CD8-positive, alpha-beta T cell (primary cell): ENCODE measurements at regions of chr7 and their contacts with region 1.

Region 1: DNA sequence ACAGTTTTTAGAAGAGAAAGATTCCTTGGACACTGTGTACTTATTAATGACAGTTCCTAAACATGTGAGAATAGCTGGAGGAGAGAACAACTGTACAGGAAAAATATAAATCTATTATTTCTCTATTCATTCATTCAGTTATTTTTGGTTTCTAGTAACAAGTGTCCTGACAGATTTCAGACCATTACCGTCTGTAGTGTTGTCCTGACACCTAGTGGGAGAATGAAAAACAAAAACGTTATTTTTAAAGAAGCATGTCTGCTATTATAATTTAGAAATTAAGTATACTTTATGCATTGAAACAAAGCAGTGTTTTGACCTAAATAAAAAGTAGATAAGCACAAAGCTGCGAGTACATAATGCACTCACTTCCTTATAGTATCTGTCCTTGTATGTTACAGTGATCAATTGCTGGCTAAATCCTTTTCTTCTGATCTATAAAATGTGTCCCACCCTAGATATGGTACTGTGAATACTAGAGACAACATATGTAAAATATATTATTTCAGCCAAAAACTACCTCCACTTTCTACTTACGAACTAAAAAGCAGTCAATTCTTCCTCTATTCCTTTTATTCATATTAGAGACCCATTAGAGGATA is 575.6 kb downstream of the ARL4A start:
- DNase-seq: peak in 2 of 9 experiments; percentile 47 to 55
- ATAC-seq: no peak
- H3K4me3 ChIP-seq: no peak overlapping the region
- H3K4me3 Mint-ChIP-seq: no peak overlapping the region
- H3K27ac ChIP-seq: no peak overlapping the region
- H3K27ac Mint-ChIP-seq: no peak overlapping the region
- H3K4me1 ChIP-seq: no peaks in the 10 kb centered on the region
- H3K4me1 Mint-ChIP-seq: no peaks in the 10 kb centered on the region
- H3K27me3 ChIP-seq: no peaks in the 10 kb centered on the region
- H3K27me3 Mint-ChIP-seq: no peaks in the 10 kb centered on the region
- CTCF ChIP-seq: peak; percentile 57

Region 2: DNA sequence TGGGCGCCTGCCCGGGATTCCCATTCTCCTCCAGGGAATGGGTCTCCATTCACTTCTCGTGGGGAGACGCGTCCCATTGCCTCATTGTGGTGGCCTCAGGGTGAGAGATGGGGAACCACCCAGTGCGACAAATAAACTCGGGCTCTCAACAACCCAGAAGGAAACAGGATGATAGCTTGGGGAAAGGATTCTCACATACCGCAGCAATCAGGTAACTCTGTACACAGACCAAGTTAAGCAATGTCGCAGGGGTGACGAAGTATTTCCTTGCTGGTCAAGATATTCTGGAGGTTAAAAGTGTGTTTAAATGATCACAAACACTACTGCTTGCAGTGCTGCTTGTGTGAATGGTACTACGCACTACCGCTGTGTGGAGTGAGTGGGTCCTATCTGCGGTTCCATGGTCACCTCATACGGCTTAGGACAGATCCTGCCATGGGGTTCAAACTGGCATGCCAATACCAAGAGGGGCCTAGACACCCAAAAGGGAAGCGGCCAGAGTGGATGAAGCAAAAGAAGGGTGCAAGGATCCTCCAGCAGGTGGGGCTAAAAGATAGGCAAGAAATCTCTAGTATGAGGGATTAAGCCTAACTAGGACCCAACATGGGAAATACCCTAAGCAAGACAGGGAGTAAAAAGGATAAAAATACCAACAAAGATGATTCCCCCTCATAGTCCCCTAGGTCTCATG is 1195.7 kb before region 1 on chr7:
- CTCF ChIA-PET with region 1: no interaction called
- POLR2A ChIA-PET with region 1: no interaction called
- intact Hi-C with region 1: loop called in 1 of 2 experiments (anchors 5 kb)
- DNase-seq: peak; percentile 22 to 76 (median 59)
- ATAC-seq: peak; percentile 61
- H3K4me3 ChIP-seq: no peak overlapping the region
- H3K4me3 Mint-ChIP-seq: no peak overlapping the region
- H3K27ac ChIP-seq: no peak overlapping the region
- H3K27ac Mint-ChIP-seq: no peak overlapping the region
- H3K4me1 ChIP-seq: no peaks in the 10 kb centered on the region
- H3K4me1 Mint-ChIP-seq: no peaks in the 10 kb centered on the region
- H3K27me3 ChIP-seq: no peaks in the 10 kb centered on the region
- H3K27me3 Mint-ChIP-seq: no peaks in the 10 kb centered on the region
- CTCF ChIP-seq: peak; percentile 66

Region 3: DNA sequence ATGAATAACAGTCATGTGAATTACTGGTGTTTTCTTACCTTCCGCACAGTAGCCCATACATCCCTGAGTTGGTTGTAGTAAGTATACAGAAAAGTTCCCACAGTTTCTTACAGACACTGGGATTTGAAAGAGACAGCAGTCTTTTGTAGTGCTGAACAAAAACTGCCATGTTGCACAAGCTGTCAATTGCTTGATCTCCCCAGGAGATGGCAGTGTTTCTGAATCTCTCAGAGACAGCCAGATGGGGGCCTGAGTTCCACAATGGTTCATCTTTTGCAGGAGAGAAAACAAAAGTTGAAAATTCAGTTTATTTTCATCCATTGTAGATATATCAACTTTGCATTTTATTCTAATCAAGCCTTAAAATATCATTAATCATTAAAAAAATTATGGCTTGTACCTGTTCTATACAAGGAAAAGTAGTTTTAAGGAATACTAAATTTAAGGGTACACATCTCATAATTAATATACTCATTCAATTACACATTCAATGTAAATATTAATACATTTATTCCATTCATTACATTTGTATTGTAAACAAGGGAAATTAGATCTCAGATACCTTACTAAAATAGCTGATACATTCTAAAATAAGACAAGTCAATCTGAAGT is 873.8 kb before region 1 on chr7:
- CTCF ChIA-PET with region 1: no interaction called
- POLR2A ChIA-PET with region 1: no interaction called
- intact Hi-C with region 1: loop called in 1 of 2 experiments (anchors 5 kb)
- DNase-seq: peak in 4 of 9 experiments; percentile 26 to 63 (median 40)
- ATAC-seq: peak; percentile 78
- H3K4me3 ChIP-seq: no peak overlapping the region
- H3K4me3 Mint-ChIP-seq: no peak overlapping the region
- H3K27ac ChIP-seq: no peak overlapping the region
- H3K27ac Mint-ChIP-seq: no peak overlapping the region
- H3K4me1 ChIP-seq: no peaks in the 10 kb centered on the region
- H3K4me1 Mint-ChIP-seq: no peaks in the 10 kb centered on the region
- H3K27me3 ChIP-seq: no peaks in the 10 kb centered on the region
- H3K27me3 Mint-ChIP-seq: peaks cover 2% of the 10 kb centered on the region
- CTCF ChIP-seq: peak; percentile 89

Region 4: GRCh38 chr7:12524794-12525386 is 738.1 kb before region 1 on chr7:
- CTCF ChIA-PET with region 1: interaction called, 5 read pairs
- POLR2A ChIA-PET with region 1: no interaction called
- intact Hi-C with region 1: loop called (anchors 1 to 2 kb)
- DNase-seq: peak in 2 of 9 experiments; percentile 41 to 49
- ATAC-seq: no peak
- H3K4me3 ChIP-seq: no peak overlapping the region
- H3K4me3 Mint-ChIP-seq: no peak overlapping the region
- H3K27ac ChIP-seq: no peak overlapping the region
- H3K27ac Mint-ChIP-seq: no peak overlapping the region
- H3K4me1 ChIP-seq: no peaks in the 10 kb centered on the region
- H3K4me1 Mint-ChIP-seq: no peaks in the 10 kb centered on the region
- H3K27me3 ChIP-seq: no peaks in the 10 kb centered on the region
- H3K27me3 Mint-ChIP-seq: peaks cover 23% of the 10 kb centered on the region
- CTCF ChIP-seq: peak; percentile 87

Region 5: DNA sequence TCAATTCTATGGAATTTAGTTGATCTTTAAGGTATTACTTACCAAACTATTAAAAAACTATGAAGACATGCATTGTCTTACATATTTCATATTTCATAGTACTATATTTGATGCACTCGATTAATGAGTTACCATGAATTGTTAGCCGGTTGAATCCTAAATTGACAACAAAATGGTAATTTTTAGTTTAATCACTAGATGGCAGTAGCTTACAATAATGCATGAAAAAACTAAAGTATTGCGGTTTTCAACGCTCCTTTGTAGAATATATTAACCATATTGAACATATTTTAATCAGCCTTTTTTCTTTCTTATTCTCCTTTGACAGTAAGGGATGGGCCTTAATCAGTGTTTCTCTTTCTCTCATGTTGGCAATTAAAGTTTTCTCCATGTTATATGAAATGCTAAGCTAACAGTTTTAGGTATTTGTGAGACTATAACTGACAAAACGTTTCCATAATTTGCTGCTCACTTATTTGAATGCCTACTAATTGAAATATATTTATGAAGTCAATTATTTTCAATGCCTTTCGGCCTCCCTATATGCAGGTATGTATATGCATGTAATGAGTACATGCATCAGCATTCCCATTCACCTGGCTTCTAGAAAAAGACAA is 624.1 kb before region 1 on chr7:
- CTCF ChIA-PET with region 1: interaction called, 7 read pairs
- POLR2A ChIA-PET with region 1: no interaction called
- intact Hi-C with region 1: loop called in 1 of 2 experiments (anchors 1 kb)
- DNase-seq: peak in 2 of 9 experiments; percentile 51 to 64
- ATAC-seq: peak; percentile 40
- H3K4me3 ChIP-seq: no peak overlapping the region
- H3K4me3 Mint-ChIP-seq: no peak overlapping the region
- H3K27ac ChIP-seq: no peak overlapping the region
- H3K27ac Mint-ChIP-seq: no peak overlapping the region
- H3K4me1 ChIP-seq: no peaks in the 10 kb centered on the region
- H3K4me1 Mint-ChIP-seq: peaks cover 16% of the 10 kb centered on the region
- H3K27me3 ChIP-seq: no peaks in the 10 kb centered on the region
- H3K27me3 Mint-ChIP-seq: peaks cover 2% of the 10 kb centered on the region
- CTCF ChIP-seq: peak; percentile 90

Region 6: DNA sequence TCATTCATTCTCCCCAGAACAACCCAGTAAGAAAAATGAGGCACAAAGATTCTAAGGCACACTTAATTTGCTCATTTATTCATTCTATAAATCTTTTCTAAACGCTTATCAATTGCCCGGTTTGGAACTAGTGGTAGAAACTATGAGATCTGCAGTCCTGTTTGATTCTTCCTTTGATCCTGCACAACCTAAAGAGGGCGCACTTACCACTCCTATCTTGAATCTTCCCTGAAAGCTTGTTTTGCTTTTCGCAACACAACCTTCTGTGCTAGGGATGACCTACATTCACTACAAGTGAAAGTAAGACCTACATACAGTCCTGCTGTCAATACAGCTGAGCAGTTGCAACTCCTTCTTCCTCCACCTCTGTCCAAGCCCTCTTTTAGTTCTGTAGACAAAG is 588.2 kb before region 1 on chr7:
- CTCF ChIA-PET with region 1: interaction called, 5 read pairs
- POLR2A ChIA-PET with region 1: no interaction called
- intact Hi-C with region 1: loop called in 1 of 2 experiments (anchors 2 kb)
- DNase-seq: peak in 8 of 9 experiments; percentile 13 to 81 (median 32)
- ATAC-seq: peak; percentile 92
- H3K4me3 ChIP-seq: no peak overlapping the region
- H3K4me3 Mint-ChIP-seq: no peak overlapping the region
- H3K27ac ChIP-seq: no peak overlapping the region
- H3K27ac Mint-ChIP-seq: peak overlapping the region; percentile 65
- H3K4me1 ChIP-seq: no peaks in the 10 kb centered on the region
- H3K4me1 Mint-ChIP-seq: peaks cover 8% of the 10 kb centered on the region
- H3K27me3 ChIP-seq: peaks cover 0 to 2% of the 10 kb centered on the region in 2 experiments
- H3K27me3 Mint-ChIP-seq: no peaks in the 10 kb centered on the region
- CTCF ChIP-seq: no peak

Region 7: DNA sequence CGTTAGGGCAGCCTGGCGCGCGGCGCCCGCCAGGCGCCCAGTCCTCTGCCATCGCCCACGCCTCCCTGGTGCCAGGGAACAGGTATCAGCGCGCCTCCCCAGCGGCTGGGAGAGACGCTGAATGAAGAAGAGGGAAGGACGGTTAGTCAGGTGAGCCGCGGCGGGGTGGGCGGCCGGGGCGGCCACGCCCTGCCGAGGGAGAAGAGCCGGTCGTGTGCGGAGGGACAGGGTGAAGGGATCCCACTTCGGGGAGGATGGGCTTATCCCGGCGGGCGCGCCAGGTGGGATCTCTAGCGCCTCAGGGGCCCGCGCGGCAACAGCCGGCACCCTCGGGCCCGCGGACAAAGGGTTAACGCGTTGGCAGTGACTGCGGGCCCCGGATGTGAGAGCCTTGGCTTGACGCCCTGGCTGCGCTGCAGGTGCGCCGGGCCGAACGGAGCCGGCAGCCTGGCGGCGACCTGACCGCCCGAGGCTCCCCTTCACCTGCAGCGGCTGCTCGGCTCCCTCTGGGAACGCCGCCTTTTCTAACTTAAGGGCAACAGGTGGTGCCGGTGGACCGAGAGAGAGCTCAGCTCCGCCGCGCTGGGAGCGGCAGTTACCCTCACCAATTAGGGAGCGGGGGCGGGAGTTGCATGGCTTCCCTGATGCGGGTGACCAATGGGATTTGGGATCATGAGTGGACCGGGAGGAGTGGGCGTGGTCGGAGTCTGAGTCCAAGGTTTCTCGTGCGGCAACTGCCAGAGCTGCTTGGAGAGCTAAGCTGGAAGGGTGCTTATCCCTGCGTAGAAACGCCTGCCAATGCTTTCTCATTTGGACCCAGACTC is 575.9 kb before region 1 on chr7 and contains the start of gene ARL4A:
- CTCF ChIA-PET with region 1: interaction called, 4 read pairs
- POLR2A ChIA-PET with region 1: no interaction called
- intact Hi-C with region 1: loop called in 1 of 2 experiments (anchors 1 kb)
- DNase-seq: peak; percentile 70 to 94 (median 87)
- ATAC-seq: peak; percentile 41
- H3K4me3 ChIP-seq: peak within 1 kb of the TSS; percentile 94
- H3K4me3 Mint-ChIP-seq: peak within 1 kb of the TSS; percentile 92
- H3K27ac ChIP-seq: peak within 1 kb of the TSS; percentile 97 to 99
- H3K27ac Mint-ChIP-seq: peak within 1 kb of the TSS; percentile 93
- H3K4me1 ChIP-seq: no peaks in the 10 kb centered on the region
- H3K4me1 Mint-ChIP-seq: peaks cover 27% of the 10 kb centered on the region
- H3K27me3 ChIP-seq: no peaks in the 10 kb centered on the region
- H3K27me3 Mint-ChIP-seq: no peaks in the 10 kb centered on the region
- CTCF ChIP-seq: peak; percentile 44
- total RNA-seq, gene ARL4A: 48.6 to 56.2 TPM

Region 8: GRCh38 chr7:13067036-13067435 is 196.0 kb before region 1 on chr7:
- CTCF ChIA-PET with region 1: no interaction called
- POLR2A ChIA-PET with region 1: no interaction called
- intact Hi-C with region 1: no loop called
- DNase-seq: no peak
- ATAC-seq: no peak
- H3K4me3 ChIP-seq: no peak overlapping the region
- H3K4me3 Mint-ChIP-seq: no peak overlapping the region
- H3K27ac ChIP-seq: no peak overlapping the region
- H3K27ac Mint-ChIP-seq: no peak overlapping the region
- H3K4me1 ChIP-seq: no peaks in the 10 kb centered on the region
- H3K4me1 Mint-ChIP-seq: no peaks in the 10 kb centered on the region
- H3K27me3 ChIP-seq: no peaks in the 10 kb centered on the region
- H3K27me3 Mint-ChIP-seq: peaks cover 2% of the 10 kb centered on the region
- CTCF ChIP-seq: no peak

Region 9: GRCh38 chr7:13201628-13202027 is 61.4 kb before region 1 on chr7:
- CTCF ChIA-PET with region 1: no interaction called
- POLR2A ChIA-PET with region 1: no interaction called
- intact Hi-C with region 1: no loop called
- DNase-seq: no peak
- ATAC-seq: no peak
- H3K4me3 ChIP-seq: no peak overlapping the region
- H3K4me3 Mint-ChIP-seq: no peak overlapping the region
- H3K27ac ChIP-seq: no peak overlapping the region
- H3K27ac Mint-ChIP-seq: no peak overlapping the region
- H3K4me1 ChIP-seq: no peaks in the 10 kb centered on the region
- H3K4me1 Mint-ChIP-seq: no peaks in the 10 kb centered on the region
- H3K27me3 ChIP-seq: no peaks in the 10 kb centered on the region
- H3K27me3 Mint-ChIP-seq: no peaks in the 10 kb centered on the region
- CTCF ChIP-seq: no peak

Region 10: GRCh38 chr7:13327669-13328068 is 64.6 kb after region 1 on chr7:
- CTCF ChIA-PET with region 1: no interaction called
- POLR2A ChIA-PET with region 1: no interaction called
- intact Hi-C with region 1: no loop called
- DNase-seq: no peak
- ATAC-seq: no peak
- H3K4me3 ChIP-seq: no peak overlapping the region
- H3K4me3 Mint-ChIP-seq: no peak overlapping the region
- H3K27ac ChIP-seq: no peak overlapping the region
- H3K27ac Mint-ChIP-seq: no peak overlapping the region
- H3K4me1 ChIP-seq: no peaks in the 10 kb centered on the region
- H3K4me1 Mint-ChIP-seq: no peaks in the 10 kb centered on the region
- H3K27me3 ChIP-seq: no peaks in the 10 kb centered on the region
- H3K27me3 Mint-ChIP-seq: no peaks in the 10 kb centered on the region
- CTCF ChIP-seq: no peak